ENCODE measurements at regions of chr17 and their contacts with region 1.

Region 1: DNA sequence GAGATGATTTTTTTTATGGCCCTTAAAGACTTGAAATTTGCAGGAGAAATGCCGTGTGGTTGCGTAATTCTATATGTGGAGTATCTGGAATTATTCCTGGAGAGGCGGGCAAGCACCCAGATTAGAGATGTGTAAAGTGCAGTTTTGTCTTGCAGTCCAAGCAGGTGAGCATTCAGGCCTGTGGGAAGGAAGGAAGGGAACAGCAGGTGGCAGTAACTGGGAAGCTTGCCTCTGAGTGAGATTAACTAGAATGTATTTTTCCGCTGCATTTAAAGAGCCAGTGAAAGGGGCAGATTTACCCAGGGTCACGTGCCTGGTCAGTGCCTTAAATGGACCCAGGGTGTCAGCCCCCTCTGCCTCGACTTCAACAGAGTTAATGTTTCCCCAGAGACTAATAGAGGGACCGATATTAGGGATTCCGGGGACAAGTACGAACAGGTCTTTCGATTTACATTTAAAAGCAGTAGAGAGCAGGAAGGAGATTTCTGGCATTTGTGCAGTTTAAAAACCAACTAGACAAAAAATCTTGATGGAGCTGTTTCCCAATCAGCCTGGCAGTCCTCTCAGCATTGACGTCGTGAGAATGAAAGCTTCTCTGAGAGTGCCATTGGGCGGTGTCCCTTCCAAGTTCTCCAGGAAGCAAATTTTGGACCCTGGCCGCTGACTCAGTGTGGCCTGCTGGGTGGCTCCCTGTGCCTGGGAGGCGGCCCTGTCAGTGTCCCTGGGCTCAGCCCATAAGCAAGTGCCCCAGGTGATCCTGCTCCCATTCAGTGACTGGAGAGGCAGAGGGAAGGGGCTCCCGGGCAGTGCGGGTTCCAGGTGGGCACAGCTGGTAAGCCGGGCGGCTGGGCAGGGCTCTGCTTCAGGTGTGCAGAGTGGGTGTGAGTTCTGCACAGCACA is 38.2 kb downstream of the KSR1 start:
- DNase-seq: peak; percentile 84
- ATAC-seq: peak; percentile 86
- H3K4me3 ChIP-seq: peak overlapping the region; percentile 52 to 70 (median 57)
- H3K27ac ChIP-seq: peak overlapping the region; percentile 73
- H3K4me1 ChIP-seq: peaks cover 69% of the 10 kb centered on the region
- H3K27me3 ChIP-seq: no peaks in the 10 kb centered on the region
- CTCF ChIP-seq: peak; percentile 89
- EP300 ChIP-seq: peak; percentile 36 to 45; a peak in 1 of 4 replicates
- POLR2A ChIP-seq: peak; percentile 32 to 61; a peak in 2 of 4 replicates
- RAD21 ChIP-seq: peak; percentile 81

Region 2: GRCh38 chr17:26731005-26731921 is 763.2 kb before region 1 on chr17:
- CTCF ChIA-PET with region 1: no interaction called
- POLR2A ChIA-PET with region 1: no interaction called
- in situ Hi-C with region 1: no loop called
- intact Hi-C with region 1: no loop called
- DNase-seq: no peak
- ATAC-seq: no peak
- H3K4me3 ChIP-seq: no peak overlapping the region
- H3K27ac ChIP-seq: no peak overlapping the region
- H3K4me1 ChIP-seq: no peaks in the 10 kb centered on the region
- H3K27me3 ChIP-seq: no peaks in the 10 kb centered on the region
- CTCF ChIP-seq: no peak
- EP300 ChIP-seq: no peak
- POLR2A ChIP-seq: no peak
- RAD21 ChIP-seq: no peak

Region 3: DNA sequence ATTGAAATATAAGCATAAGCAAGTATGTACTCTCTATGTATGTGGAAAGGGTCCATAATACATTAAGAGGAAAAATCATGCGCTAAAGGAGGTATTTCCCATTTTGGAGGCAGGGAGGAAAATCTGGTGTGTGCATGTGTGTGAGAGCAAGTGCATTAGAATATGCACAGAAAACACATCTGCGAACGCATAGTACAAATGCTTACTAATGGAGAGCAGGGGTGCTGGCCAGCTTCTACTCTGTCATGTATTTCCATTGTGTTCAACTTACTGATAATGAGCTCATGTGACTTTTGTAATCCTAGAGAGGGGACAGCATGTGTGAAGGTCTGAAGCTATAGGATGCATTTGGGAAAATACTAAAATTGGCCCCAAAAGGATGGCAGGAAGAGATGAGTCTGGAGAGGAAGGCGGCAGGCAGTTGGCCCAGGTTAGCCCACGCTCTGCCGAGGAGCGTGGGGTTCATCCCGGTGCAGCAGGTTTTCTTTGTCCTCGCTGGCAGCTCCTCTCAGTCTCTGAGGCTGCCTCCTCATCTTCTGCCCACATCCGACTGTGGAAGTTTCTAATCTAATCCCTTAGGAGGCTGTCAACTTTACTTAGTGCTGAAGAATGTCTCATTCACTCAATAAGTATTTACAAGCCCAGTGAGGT is 56.0 kb before region 1 on chr17:
- CTCF ChIA-PET with region 1: no interaction called
- POLR2A ChIA-PET with region 1: no interaction called
- in situ Hi-C with region 1: no loop called
- intact Hi-C with region 1: no loop called
- DNase-seq: no peak
- ATAC-seq: no peak
- H3K4me3 ChIP-seq: no peak overlapping the region
- H3K27ac ChIP-seq: no peak overlapping the region
- H3K4me1 ChIP-seq: no peaks in the 10 kb centered on the region
- H3K27me3 ChIP-seq: no peaks in the 10 kb centered on the region; a peak in 2 of 5 replicates
- CTCF ChIP-seq: no peak
- EP300 ChIP-seq: no peak
- POLR2A ChIP-seq: no peak
- RAD21 ChIP-seq: no peak

Region 4: DNA sequence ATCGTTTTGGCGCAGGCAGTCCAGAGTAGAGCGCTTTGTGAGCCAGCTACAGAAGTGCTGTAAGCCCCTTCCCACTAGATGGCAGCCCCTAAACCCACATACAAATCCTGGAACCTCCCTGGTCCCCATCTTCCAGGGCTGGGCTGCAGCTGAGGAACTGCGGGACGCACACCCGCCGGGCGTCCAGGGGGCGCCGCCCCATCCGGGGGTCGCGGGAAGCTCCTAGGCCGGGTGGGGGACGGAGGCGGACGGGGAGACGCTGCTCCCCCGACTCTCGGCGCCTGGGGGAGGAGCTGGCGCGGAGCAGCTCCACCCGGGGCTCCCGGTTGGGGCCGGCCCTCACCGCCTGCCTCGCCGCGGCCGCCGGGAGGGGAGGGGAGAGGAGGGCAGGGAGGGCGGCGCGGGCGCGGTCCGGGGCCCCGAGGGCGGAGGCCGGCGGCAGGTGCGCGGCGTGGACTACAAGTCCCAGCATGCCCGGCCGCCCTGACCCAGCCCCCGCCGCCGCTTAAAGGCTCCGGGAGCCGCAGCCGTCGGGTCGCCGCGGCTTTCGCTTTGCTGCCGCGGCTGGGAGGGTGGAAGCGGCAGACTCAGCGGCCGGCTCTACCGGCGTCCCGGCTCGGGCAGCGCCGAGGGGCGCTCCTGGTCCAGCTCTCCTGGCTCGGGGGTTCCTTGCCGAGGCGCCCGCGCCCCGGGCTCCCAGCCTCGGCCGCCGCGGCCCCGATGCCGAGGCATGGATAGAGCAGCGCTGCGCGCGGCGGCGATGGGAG is 38.3 kb before region 1 on chr17 and contains the start of gene KSR1:
- CTCF ChIA-PET with region 1: no interaction called
- POLR2A ChIA-PET with region 1: interaction called, 7 read pairs
- in situ Hi-C with region 1: loop called (anchors 5 kb)
- intact Hi-C with region 1: loop called (anchors 1 kb)
- DNase-seq: peak; percentile 60
- ATAC-seq: peak; percentile 80
- H3K4me3 ChIP-seq: peak within 1 kb of the TSS; percentile 83 to 87 (median 84)
- H3K27ac ChIP-seq: peak within 1 kb of the TSS; percentile 82
- H3K4me1 ChIP-seq: peaks cover 40% of the 10 kb centered on the region
- H3K27me3 ChIP-seq: peaks cover 2 to 21% of the 10 kb centered on the region in 2 experiments; a peak in 3 of 5 replicates
- CTCF ChIP-seq: peak; percentile 77
- EP300 ChIP-seq: no peak
- POLR2A ChIP-seq: peak; percentile 43 to 76; a peak in 2 of 4 replicates
- RAD21 ChIP-seq: peak; percentile 71
- total RNA-seq, gene KSR1: 8.0 and 10.1 TPM in 2 replicates

Region 5: GRCh38 chr17:27512031-27512430 is 17.6 kb after region 1 on chr17:
- CTCF ChIA-PET with region 1: no interaction called
- POLR2A ChIA-PET with region 1: no interaction called
- in situ Hi-C with region 1: no loop called
- intact Hi-C with region 1: no loop called
- DNase-seq: no peak
- ATAC-seq: no peak
- H3K4me3 ChIP-seq: no peak overlapping the region
- H3K27ac ChIP-seq: no peak overlapping the region
- H3K4me1 ChIP-seq: peaks cover 11% of the 10 kb centered on the region
- H3K27me3 ChIP-seq: no peaks in the 10 kb centered on the region
- CTCF ChIP-seq: no peak
- EP300 ChIP-seq: no peak
- POLR2A ChIP-seq: no peak
- RAD21 ChIP-seq: no peak

Region 6: GRCh38 chr17:27532269-27533263 is 38.1 kb after region 1 on chr17:
- CTCF ChIA-PET with region 1: no interaction called
- POLR2A ChIA-PET with region 1: interaction called, 10 read pairs
- in situ Hi-C with region 1: no loop called
- intact Hi-C with region 1: loop called (anchors 1 kb)
- DNase-seq: peak; percentile 88
- ATAC-seq: peak; percentile 84
- H3K4me3 ChIP-seq: peak overlapping the region; percentile 13 to 55 (median 17); a peak in 4 of 6 replicates
- H3K27ac ChIP-seq: peak overlapping the region; percentile 25
- H3K4me1 ChIP-seq: peaks cover 84% of the 10 kb centered on the region
- H3K27me3 ChIP-seq: no peaks in the 10 kb centered on the region
- CTCF ChIP-seq: peak; percentile 13; the same call in 1 of the 2 replicates
- EP300 ChIP-seq: peak in 1 of 2 experiments; percentile 71; a peak in 2 of 4 replicates
- POLR2A ChIP-seq: no peak
- RAD21 ChIP-seq: no peak

Region 7: GRCh38 chr17:27559506-27560481 is 65.4 kb after region 1 on chr17:
- CTCF ChIA-PET with region 1: interaction called, 3 read pairs
- POLR2A ChIA-PET with region 1: interaction called, 33 read pairs
- in situ Hi-C with region 1: loop called (anchors 5 kb)
- intact Hi-C with region 1: loop called (anchors 1 kb)
- DNase-seq: peak; percentile 62
- ATAC-seq: peak; percentile 66
- H3K4me3 ChIP-seq: peak overlapping the region; percentile 22 to 68 (median 24); a peak in 5 of 6 replicates
- H3K27ac ChIP-seq: peak overlapping the region; percentile 75
- H3K4me1 ChIP-seq: peaks cover 49% of the 10 kb centered on the region
- H3K27me3 ChIP-seq: no peaks in the 10 kb centered on the region
- CTCF ChIP-seq: peak; percentile 2; the same call in 1 of the 2 replicates
- EP300 ChIP-seq: no peak
- POLR2A ChIP-seq: no peak
- RAD21 ChIP-seq: no peak

Region 8: DNA sequence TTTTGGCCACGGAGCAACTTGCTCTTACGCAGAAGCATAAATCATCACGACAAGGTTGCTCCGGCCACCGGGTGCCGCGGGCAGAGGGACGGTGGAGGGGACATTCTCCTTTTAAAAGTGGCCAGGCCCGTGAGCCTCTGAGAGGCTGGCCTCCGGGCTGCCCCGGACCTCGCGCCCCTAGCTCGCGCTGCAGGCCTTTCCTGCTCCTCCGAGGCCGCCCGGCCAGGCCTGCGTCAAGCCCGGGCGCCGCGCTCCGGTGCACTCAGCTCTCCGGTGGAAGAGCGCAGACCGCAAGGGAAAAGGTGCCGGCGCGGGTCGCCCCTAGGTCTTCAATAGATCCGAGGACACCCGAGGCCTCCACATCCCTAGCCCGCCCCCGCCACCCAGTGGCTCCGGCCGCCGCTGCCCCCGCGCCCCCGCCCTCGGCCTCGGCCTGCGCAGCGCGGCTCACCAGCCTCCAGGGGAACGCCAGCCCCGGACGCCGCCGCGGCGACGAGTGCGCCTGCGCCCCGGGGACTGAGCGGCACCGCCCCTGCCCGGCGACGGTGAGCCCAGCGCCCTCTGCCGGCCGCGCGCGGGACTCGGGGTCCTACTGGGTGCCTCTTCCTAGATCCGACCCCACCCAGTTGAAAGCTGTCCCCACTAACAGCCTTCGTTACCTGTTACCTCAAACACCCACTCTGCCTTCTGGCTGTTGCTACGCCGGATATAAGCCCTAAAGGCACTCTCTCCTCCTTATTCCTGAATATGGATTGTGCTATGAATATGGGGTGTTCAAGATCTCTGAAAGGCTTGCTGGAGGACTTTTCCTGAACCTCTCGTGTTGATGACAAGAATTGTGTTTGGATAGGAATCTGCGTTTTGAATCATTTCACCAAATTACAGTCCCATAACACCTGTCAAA is 398.7 kb after region 1 on chr17 and contains the start of gene LYRM9:
- CTCF ChIA-PET with region 1: no interaction called
- POLR2A ChIA-PET with region 1: no interaction called
- in situ Hi-C with region 1: loop called (anchors 25 kb)
- intact Hi-C with region 1: no loop called
- DNase-seq: peak; percentile 75
- ATAC-seq: peak; percentile 98
- H3K4me3 ChIP-seq: peak within 1 kb of the TSS; percentile 58 to 74 (median 69)
- H3K27ac ChIP-seq: no peak within 1 kb of the TSS
- H3K4me1 ChIP-seq: peaks cover 23% of the 10 kb centered on the region
- H3K27me3 ChIP-seq: no peaks in the 10 kb centered on the region
- CTCF ChIP-seq: peak; percentile 83
- EP300 ChIP-seq: no peak
- POLR2A ChIP-seq: no peak; a peak in 1 of 4 replicates
- RAD21 ChIP-seq: peak; percentile 56; the same call in 1 of the 2 replicates
- total RNA-seq, gene LYRM9: 0.18 and 0.24 TPM in 2 replicates

Measured in HepG2 (cell line).